Activated T-helper 1 cell treated with anti-CD3 and anti-CD28 coated beads, Interleukin-12 subunit alpha, Interleukin-12 subunit beta, Interleukin-2, Interleukin-4 antibody, amounts not matched to agents 30 ng/mL and 10 ng/mL and 1 ng/mL, durations not matched to agents 14 hours and 24 hours and 36 hours (primary cell): ENCODE measurements at regions of chr1 and their contacts with region 1.

Region 1: DNA sequence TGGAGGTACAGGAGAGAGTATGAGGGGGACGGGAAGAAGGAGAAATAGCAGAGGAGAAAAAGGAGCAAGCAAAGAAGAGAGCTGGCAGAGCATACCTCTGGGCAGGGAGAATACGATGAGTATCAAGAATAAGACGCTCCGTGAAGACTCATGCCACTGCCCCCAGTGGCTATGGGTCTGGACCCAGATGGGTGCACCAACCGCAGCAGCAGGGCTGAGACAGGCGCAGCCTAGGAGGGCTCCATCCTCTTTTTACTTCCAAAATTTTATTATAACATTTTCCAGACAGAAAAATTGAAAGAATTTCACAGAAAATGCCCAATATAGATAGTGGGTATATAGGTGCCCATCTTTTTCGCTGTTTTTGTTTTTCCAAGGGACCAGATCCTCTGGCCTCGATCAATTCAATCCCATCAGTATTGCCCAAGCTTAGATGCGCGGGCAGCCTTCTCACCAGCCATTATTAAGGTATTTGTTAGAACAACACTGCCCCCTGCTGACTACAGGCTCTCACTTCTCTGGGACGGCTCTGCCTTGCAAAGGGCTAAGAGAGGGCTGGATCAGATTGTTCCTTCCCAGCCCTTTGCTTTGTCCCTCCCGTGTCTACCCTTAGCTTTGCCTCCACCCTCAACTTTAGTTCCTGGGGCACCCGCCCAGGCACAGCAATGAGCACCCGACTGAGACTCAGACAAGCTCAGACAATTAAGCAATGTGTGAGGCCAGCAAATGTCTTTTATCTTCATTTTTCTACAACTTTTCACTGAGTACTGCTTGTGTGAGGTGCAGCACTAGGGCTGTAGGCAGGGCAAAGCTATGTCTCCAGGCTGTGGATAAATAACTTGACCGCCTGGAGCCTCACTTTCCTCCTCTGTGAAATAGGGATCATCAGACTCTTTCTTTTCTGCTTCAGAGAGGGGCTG is 17.5 kb upstream of the CAMK1G start:
- DNase-seq: peak; percentile 66
- H3K4me3 Mint-ChIP-seq: no peak overlapping the region
- H3K27ac Mint-ChIP-seq: no peak overlapping the region
- H3K4me1 Mint-ChIP-seq: peaks cover 27% of the 10 kb centered on the region
- H3K27me3 Mint-ChIP-seq: peaks cover 41% of the 10 kb centered on the region

Region 2: GRCh38 chr1:208652296-208653160 is 913.5 kb before region 1 on chr1:
- intact Hi-C with region 1: loop called (anchors 1 kb)
- DNase-seq: peak; percentile 5
- H3K4me3 Mint-ChIP-seq: no peak overlapping the region
- H3K27ac Mint-ChIP-seq: no peak overlapping the region
- H3K4me1 Mint-ChIP-seq: no peaks in the 10 kb centered on the region
- H3K27me3 Mint-ChIP-seq: peaks cover 11% of the 10 kb centered on the region

Region 3: DNA sequence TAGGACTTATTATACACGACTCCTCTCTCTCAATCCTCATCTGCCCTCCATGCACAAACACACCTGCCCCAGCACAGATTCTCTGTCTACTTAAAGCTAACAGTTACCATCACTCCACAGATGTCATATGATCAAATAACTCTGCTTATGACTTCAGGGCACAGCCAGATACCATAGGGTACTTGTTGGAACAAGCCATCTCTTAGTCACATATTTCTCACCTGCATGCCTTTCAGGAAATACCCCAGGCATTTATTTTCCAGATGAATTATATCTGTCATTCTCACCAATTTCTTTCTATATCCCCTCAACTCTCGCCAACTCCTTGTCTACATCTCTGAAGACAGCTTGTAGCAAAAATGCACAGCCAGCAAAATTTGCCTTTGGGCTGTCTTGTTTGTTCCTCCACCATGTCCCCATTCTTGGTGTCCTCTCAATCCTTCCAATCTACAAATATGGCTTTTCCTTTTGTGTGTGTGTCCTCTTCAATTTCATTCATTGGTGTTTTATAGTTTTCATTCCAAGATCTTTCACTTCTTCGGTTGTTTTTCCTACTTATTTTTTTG is 336.4 kb before region 1 on chr1:
- intact Hi-C with region 1: no loop called
- DNase-seq: no peak
- H3K4me3 Mint-ChIP-seq: no peak overlapping the region
- H3K27ac Mint-ChIP-seq: no peak overlapping the region
- H3K4me1 Mint-ChIP-seq: no peaks in the 10 kb centered on the region
- H3K27me3 Mint-ChIP-seq: peaks cover 5% of the 10 kb centered on the region

Region 4: DNA sequence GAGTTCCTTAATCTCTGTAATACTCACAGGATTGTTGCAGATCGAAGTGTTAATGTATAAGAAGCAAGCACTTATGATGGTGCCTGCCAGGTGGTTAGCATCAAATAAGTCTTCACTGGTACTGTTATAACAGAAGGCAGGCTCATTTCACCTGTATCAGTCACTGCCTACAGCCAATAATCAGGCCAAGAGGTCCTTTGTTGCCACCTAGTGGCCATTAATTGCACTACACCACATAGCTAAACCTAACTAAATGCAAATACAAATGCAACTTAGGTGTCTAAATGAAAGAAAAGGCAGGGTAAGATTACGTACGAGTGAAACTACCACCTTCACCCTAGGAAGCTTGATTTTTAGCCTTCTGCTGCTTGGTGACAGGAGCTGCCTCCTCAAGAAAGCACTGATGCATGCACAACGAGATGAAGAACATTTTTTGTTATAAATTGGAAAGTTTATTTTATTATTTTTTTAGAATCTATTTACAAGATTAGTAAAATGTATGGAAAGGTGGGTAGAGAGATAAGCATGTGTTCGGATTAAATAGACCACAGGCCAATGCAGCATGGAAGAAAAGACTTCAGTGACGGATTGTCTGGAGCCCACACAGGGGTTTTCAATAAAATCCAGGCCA is 317.3 kb before region 1 on chr1:
- intact Hi-C with region 1: loop called (anchors 2 kb)
- DNase-seq: peak; percentile 6
- H3K4me3 Mint-ChIP-seq: no peak overlapping the region
- H3K27ac Mint-ChIP-seq: no peak overlapping the region
- H3K4me1 Mint-ChIP-seq: no peaks in the 10 kb centered on the region
- H3K27me3 Mint-ChIP-seq: peaks cover 2% of the 10 kb centered on the region

Region 5: DNA sequence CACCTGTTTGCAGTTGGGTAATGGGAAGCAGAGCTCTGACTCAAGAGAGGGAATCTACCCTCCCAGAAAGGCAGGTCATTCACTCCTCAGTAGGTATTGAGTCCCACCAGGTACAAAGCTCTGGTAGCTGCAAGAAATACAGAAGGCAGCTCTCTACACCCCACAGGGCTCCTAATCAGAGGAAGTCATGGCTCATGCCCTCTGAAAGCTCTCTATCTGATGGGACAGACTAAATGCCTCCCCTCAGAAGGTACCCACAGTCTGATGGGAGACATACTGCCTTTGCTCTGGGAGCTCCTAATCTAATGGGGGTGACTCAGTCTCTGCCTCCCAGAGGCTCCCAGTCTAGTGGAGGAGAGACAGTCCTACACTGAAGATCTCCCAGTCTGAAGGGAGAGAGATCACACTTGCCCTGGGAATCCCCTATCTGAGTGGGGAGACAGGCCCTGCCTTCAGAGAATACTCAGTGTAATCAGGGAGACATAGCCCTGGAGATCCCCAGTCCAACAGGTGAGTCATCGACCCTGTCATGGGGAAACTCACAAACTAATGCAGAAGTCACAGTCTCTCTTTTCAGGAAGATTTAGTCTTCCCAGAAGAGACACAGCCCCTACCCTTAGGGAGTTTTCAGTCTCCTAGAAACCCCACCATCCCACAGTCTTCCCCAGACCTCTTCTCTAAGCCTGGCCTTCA is 41.2 kb after region 1 on chr1:
- intact Hi-C with region 1: loop called (anchors 2 kb)
- DNase-seq: peak; percentile 39
- H3K4me3 Mint-ChIP-seq: no peak overlapping the region
- H3K27ac Mint-ChIP-seq: peak overlapping the region; percentile 66
- H3K4me1 Mint-ChIP-seq: peaks cover 15% of the 10 kb centered on the region
- H3K27me3 Mint-ChIP-seq: no peaks in the 10 kb centered on the region

Region 6: GRCh38 chr1:209692745-209693504 is 126.9 kb after region 1 on chr1:
- intact Hi-C with region 1: loop called (anchors 1 kb)
- DNase-seq: peak; percentile 65
- H3K4me3 Mint-ChIP-seq: peak overlapping the region; percentile 3
- H3K27ac Mint-ChIP-seq: peak overlapping the region; percentile 74
- H3K4me1 Mint-ChIP-seq: peaks cover 70% of the 10 kb centered on the region
- H3K27me3 Mint-ChIP-seq: no peaks in the 10 kb centered on the region

Region 7: GRCh38 chr1:209827384-209828262 is 261.6 kb after region 1 on chr1 and contains the start of gene UTP25:
- intact Hi-C with region 1: loop called (anchors 1 kb)
- DNase-seq: peak; percentile 89
- H3K4me3 Mint-ChIP-seq: peak within 1 kb of the TSS; percentile 93
- H3K27ac Mint-ChIP-seq: peak within 1 kb of the TSS; percentile 90
- H3K4me1 Mint-ChIP-seq: peaks cover 51% of the 10 kb centered on the region
- H3K27me3 Mint-ChIP-seq: peaks cover 9% of the 10 kb centered on the region
- total RNA-seq, gene UTP25: 17.7 and 18.3 TPM in 2 replicates

Region 8: DNA sequence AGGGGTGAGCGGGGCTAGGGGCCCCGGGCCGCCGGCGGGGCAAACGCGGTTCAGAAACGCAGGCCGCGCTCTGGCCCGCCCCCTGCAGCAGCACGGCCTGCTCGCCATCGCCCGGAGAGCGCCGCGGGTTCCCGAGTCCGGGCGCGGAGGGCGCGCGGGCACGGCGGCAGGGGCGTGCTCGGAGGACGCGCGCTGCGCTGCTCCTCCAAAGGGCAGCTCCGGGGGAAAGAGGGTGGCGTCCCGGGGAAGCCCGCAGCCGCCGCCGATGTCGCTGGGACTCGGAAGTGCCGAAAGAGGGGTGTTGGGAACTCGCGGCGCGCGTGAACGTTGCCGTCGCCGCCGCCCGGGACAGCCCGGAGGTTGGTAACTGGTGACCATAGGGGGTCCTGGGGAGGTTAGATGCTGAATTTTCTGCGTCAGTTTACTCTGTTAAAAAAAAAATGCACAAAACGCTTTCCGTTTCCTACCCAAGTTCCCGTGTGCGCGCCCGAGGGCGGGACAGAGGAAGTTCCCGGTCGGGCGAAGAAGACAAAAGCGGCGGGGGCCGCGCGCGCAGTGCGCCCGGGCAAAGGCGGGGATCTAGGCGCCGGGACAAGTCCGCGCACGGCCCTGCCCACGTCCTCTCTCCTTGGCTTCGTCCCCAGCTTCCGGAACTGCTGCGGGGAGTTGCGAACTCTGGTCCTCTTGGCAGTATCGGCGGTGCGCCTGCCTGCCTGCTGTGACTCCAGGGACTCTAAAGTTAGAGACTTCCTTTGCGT is 762.9 kb after region 1 on chr1 and contains the start of gene HHAT:
- intact Hi-C with region 1: loop called (anchors 10 kb)
- DNase-seq: peak; percentile 52
- H3K4me3 Mint-ChIP-seq: peak within 1 kb of the TSS; percentile 90
- H3K27ac Mint-ChIP-seq: peak within 1 kb of the TSS; percentile 95
- H3K4me1 Mint-ChIP-seq: peaks cover 42% of the 10 kb centered on the region
- H3K27me3 Mint-ChIP-seq: peaks cover 12% of the 10 kb centered on the region
- total RNA-seq, gene HHAT: 0.67 and 0.73 TPM in 2 replicates